Esophagus muscularis mucosa (tissue), 4 donors: ENCODE measurements at regions of chr19 and their contacts with region 1.

Region 1: GRCh38 chr19:36850559-36851442 is at the start of gene ZNF345:
- DNase-seq: peak; percentile 96
- H3K4me3 ChIP-seq: peak within 1 kb of the TSS; percentile 66 to 95 (median 76)
- H3K27ac ChIP-seq: peak within 1 kb of the TSS; percentile 82 to 94 (median 88)
- H3K4me1 ChIP-seq: peaks cover 12 to 28% (median 23%) of the 10 kb centered on the region in 4 donors
- H3K27me3 ChIP-seq: no peaks in the 10 kb centered on the region
- CTCF ChIP-seq: no peak
- EP300 ChIP-seq: no peak
- POLR2A ChIP-seq: peak; percentile 4
- total RNA-seq, gene ZNF345: 3.0 to 6.6 (median 4.3) TPM

Region 2: GRCh38 chr19:36687214-36688056 is 163.4 kb before region 1 on chr19 and contains the start of gene ZNF567:
- intact Hi-C with region 1: loop called (anchors 10 kb)
- DNase-seq: peak; percentile 99
- H3K4me3 ChIP-seq: peak within 1 kb of the TSS; percentile 79 to 90 (median 80)
- H3K27ac ChIP-seq: peak within 1 kb of the TSS; percentile 74 to 82 (median 79)
- H3K4me1 ChIP-seq: peaks cover 14 to 28% (median 21%) of the 10 kb centered on the region in 4 donors
- H3K27me3 ChIP-seq: no peaks in the 10 kb centered on the region
- CTCF ChIP-seq: no peak
- EP300 ChIP-seq: no peak
- POLR2A ChIP-seq: peak; percentile 13
- total RNA-seq, gene ZNF567: 5.5 to 9.1 (median 6.9) TPM

Region 3: DNA sequence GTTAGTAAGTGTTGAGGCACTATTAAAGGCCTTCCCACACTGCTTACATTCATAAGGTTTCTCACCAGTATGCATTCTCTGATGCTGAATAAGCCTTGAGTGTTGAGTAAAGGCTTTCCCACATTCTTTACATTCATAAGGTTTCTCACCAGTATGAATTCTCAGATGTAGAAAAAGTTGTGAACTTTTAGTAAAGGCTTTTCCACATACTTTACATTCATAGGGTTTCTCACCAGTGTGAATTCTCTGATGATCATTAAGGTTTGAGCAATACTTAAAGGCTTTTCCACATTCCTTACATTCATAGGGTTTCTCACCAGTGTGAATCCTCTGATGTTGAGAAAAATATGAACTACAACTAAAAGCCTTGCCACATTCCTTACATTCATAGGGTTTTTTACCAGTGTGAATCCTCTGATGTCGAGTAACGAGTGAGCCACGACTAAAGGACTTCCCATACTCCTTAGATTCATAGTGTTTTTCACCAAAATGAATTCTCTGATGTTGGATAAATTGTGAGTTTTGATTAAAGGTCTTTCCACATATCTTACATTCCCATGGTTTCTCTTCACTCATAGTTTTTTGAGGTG is 41.1 kb after region 1 on chr19:
- intact Hi-C with region 1: no loop called
- DNase-seq: no peak
- H3K4me3 ChIP-seq: peak overlapping the region in 1 of 4 donors; percentile 4
- H3K27ac ChIP-seq: no peak overlapping the region
- H3K4me1 ChIP-seq: no peaks in the 10 kb centered on the region
- H3K27me3 ChIP-seq: no peaks in the 10 kb centered on the region
- CTCF ChIP-seq: no peak
- EP300 ChIP-seq: no peak
- POLR2A ChIP-seq: no peak

Region 4: GRCh38 chr19:36915992-36916830 is 65.4 kb after region 1 on chr19 and contains the starts of genes ZNF568 and ZNF829:
- intact Hi-C with region 1: loop called (anchors 5 kb)
- DNase-seq: peak; percentile 98
- H3K4me3 ChIP-seq: peak within 1 kb of the TSS; percentile 78 to 89 (median 86)
- H3K27ac ChIP-seq: peak within 1 kb of the TSS; percentile 91 to 97 (median 96)
- H3K4me1 ChIP-seq: peaks cover 12 to 21% (median 18%) of the 10 kb centered on the region in 4 donors
- H3K27me3 ChIP-seq: no peaks in the 10 kb centered on the region
- CTCF ChIP-seq: peak; percentile 57 to 68 (median 61)
- EP300 ChIP-seq: no peak
- POLR2A ChIP-seq: no peak
- total RNA-seq, gene ZNF568: 9.1 to 14.7 (median 12.6) TPM
- total RNA-seq, gene ZNF829: 2.5 to 5.4 (median 4.1) TPM